ENCODE measurements at regions of chr18 and their contacts with region 1.

Region 1: DNA sequence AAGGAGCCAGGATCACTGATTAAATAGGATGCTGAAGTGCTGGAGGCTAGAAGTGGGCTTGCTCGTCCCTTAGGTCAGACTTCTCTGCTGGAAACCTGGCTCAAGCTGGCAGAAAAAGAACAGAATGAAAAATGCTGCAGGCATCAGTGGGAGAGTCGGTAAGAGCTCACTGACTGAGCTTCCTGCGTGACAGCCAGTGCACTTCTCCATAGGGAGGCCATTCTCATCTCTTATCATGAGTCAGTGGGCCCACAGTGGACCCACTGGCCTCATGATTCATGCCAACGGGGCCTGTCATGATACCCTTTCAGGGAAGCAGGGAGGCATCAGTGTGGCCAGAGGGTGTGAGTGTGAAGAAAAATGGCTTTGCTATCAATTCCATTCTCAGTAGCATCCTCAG is 498.2 kb downstream of the PTPRM start:
- DNase-seq: no peak
- ATAC-seq: no peak
- H3K4me3 ChIP-seq: no peak overlapping the region
- H3K27ac ChIP-seq: no peak overlapping the region
- H3K4me1 ChIP-seq: no peaks in the 10 kb centered on the region
- H3K27me3 ChIP-seq: no peaks in the 10 kb centered on the region
- CTCF ChIP-seq: no peak
- EP300 ChIP-seq: no peak
- POLR2A ChIP-seq: no peak
- RAD21 ChIP-seq: no peak

Region 2: DNA sequence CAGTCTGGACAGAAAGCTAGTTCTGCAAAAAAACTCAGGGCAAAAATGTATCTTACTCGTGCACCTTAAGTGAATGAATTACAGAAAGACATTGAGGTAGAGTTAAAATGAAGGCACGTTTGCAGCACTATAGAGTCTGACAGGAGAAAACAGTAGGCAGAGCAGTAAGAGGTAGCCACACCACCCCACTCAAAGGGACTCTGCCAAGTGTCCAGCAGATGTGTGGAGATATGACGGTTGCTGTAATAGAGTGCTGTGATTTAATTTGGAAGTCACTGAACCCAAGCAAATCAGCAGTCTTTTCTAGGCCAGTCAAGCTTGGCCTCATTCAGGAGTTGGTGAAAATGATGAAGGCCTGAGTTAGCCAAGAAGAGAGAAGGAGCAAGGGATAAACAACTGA is 33.8 kb before region 1 on chr18:
- CTCF ChIA-PET with region 1: no interaction called
- POLR2A ChIA-PET with region 1: no interaction called
- RAD21 ChIA-PET with region 1: no interaction called
- SMC1A ChIA-PET with region 1: no interaction called
- in situ Hi-C with region 1: loop called (anchors 5 kb)
- intact Hi-C with region 1: no loop called
- DNase-seq: no peak
- ATAC-seq: no peak
- H3K4me3 ChIP-seq: no peak overlapping the region
- H3K27ac ChIP-seq: no peak overlapping the region
- H3K4me1 ChIP-seq: no peaks in the 10 kb centered on the region
- H3K27me3 ChIP-seq: no peaks in the 10 kb centered on the region
- CTCF ChIP-seq: no peak
- EP300 ChIP-seq: no peak
- POLR2A ChIP-seq: no peak
- RAD21 ChIP-seq: no peak

Region 3: DNA sequence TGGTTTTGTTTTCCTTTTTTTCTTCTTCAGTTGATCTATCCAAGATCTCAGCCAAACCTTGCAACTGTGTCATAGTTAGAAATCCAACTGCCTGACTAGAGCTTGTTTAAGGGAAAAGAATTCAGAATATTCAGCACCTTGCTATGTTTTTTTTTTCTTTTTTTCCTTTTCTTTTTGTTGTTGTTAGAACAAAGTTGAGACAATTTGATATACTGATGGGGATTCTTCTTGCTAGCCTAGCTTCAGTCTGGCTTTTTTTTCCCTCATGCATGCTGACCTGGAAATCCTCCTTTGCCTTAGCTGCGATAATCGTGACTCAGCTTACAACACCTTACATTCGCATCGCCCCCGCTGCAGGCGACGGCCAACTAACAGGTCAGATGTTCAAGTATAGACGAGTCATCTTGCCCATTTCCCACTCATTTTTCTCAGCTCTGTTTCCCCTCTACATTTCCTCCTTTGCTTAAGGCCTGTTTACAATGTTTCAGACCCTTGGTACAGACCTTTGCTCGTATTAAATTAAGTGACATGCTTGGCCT is 56.7 kb after region 1 on chr18:
- CTCF ChIA-PET with region 1: no interaction called
- POLR2A ChIA-PET with region 1: no interaction called
- RAD21 ChIA-PET with region 1: no interaction called
- SMC1A ChIA-PET with region 1: no interaction called
- in situ Hi-C with region 1: no loop called
- intact Hi-C with region 1: no loop called
- DNase-seq: no peak
- ATAC-seq: no peak
- H3K4me3 ChIP-seq: no peak overlapping the region
- H3K27ac ChIP-seq: no peak overlapping the region
- H3K4me1 ChIP-seq: no peaks in the 10 kb centered on the region
- H3K27me3 ChIP-seq: no peaks in the 10 kb centered on the region
- CTCF ChIP-seq: no peak
- EP300 ChIP-seq: no peak
- POLR2A ChIP-seq: no peak
- RAD21 ChIP-seq: no peak

Region 4: GRCh38 chr18:8260319-8260718 is 195.0 kb after region 1 on chr18:
- CTCF ChIA-PET with region 1: no interaction called
- POLR2A ChIA-PET with region 1: no interaction called
- RAD21 ChIA-PET with region 1: no interaction called
- SMC1A ChIA-PET with region 1: no interaction called
- in situ Hi-C with region 1: no loop called
- intact Hi-C with region 1: no loop called
- DNase-seq: no peak
- ATAC-seq: no peak
- H3K4me3 ChIP-seq: no peak overlapping the region
- H3K27ac ChIP-seq: no peak overlapping the region
- H3K4me1 ChIP-seq: peaks cover 6% of the 10 kb centered on the region; the same call in 1 of the 2 replicates
- H3K27me3 ChIP-seq: peaks cover 0 to 2% of the 10 kb centered on the region in 2 experiments; a peak in 2 of 4 replicates
- CTCF ChIP-seq: no peak
- EP300 ChIP-seq: no peak
- POLR2A ChIP-seq: no peak
- RAD21 ChIP-seq: no peak

Region 5: DNA sequence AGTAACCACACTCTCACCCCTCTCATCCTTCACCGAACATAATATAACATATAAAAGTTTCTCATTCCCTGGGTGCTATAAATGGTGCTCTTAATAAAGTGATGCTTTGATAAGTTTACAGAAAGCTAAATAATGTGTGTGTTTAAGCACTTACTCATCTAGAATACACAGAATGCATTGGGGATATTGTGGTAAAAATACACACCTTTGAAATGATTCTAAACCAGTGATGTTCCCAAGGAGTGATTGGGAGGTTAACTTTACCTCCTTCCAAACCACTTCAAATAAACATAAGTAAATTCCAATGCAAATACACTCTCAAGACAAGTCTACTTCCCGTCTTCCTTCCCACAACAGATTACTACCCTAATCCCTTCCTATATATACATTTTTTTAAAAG is 1184.0 kb after region 1 on chr18:
- CTCF ChIA-PET with region 1: no interaction called
- POLR2A ChIA-PET with region 1: no interaction called
- RAD21 ChIA-PET with region 1: no interaction called
- SMC1A ChIA-PET with region 1: no interaction called
- in situ Hi-C with region 1: no loop called
- intact Hi-C with region 1: no loop called
- DNase-seq: no peak
- ATAC-seq: no peak
- H3K4me3 ChIP-seq: no peak overlapping the region
- H3K27ac ChIP-seq: no peak overlapping the region
- H3K4me1 ChIP-seq: no peaks in the 10 kb centered on the region
- H3K27me3 ChIP-seq: no peaks in the 10 kb centered on the region
- CTCF ChIP-seq: no peak
- EP300 ChIP-seq: no peak
- POLR2A ChIP-seq: no peak
- RAD21 ChIP-seq: no peak

Measured in GM12878 (cell line).